ENCODE measurements at regions of chr1 and their contacts with region 1.

Region 1: GRCh38 chr1:86965012-86965826 is 50.8 kb downstream of the HS2ST1 start:
- DNase-seq: no peak
- ATAC-seq: peak in 2 of 4 donors; percentile 48 to 74
- H3K4me3 ChIP-seq: no peak overlapping the region
- H3K27ac ChIP-seq: no peak overlapping the region
- H3K4me1 ChIP-seq: no peaks in the 10 kb centered on the region
- H3K27me3 ChIP-seq: no peaks in the 10 kb centered on the region
- CTCF ChIP-seq: peak; percentile 64

Region 2: GRCh38 chr1:86470859-86471258 is 494.4 kb before region 1 on chr1:
- intact Hi-C with region 1: loop called in 1 of 2 experiments (anchors 10 kb)
- DNase-seq: no peak
- ATAC-seq: no peak
- H3K4me3 ChIP-seq: no peak overlapping the region
- H3K27ac ChIP-seq: no peak overlapping the region
- H3K4me1 ChIP-seq: no peaks in the 10 kb centered on the region
- H3K27me3 ChIP-seq: no peaks in the 10 kb centered on the region
- CTCF ChIP-seq: no peak

Region 3: DNA sequence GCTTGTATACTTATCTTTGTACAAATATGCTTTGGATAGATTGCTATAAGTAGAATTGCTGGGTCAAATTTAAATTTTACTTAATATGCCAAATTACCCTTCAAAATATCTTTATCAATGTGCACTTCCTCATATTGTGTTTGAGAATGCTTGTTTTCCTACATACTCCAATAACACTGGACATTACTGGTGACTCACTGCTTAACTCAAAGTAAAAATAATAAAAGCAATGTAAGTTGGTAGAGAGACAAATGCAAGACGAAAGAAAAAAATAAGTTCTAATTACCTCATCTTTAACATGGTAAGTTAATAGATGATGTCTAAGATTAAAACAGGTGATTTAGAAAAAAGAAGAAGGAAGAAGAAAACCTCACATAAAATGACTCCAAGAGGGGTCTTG is 268.7 kb before region 1 on chr1:
- intact Hi-C with region 1: no loop called
- DNase-seq: no peak
- ATAC-seq: no peak
- H3K4me3 ChIP-seq: no peak overlapping the region
- H3K27ac ChIP-seq: no peak overlapping the region
- H3K4me1 ChIP-seq: no peaks in the 10 kb centered on the region
- H3K27me3 ChIP-seq: no peaks in the 10 kb centered on the region
- CTCF ChIP-seq: no peak

Region 4: GRCh38 chr1:86822459-86822858 is 142.8 kb before region 1 on chr1:
- intact Hi-C with region 1: no loop called
- DNase-seq: no peak
- ATAC-seq: no peak
- H3K4me3 ChIP-seq: no peak overlapping the region
- H3K27ac ChIP-seq: no peak overlapping the region
- H3K4me1 ChIP-seq: no peaks in the 10 kb centered on the region
- H3K27me3 ChIP-seq: no peaks in the 10 kb centered on the region
- CTCF ChIP-seq: no peak

Region 5: DNA sequence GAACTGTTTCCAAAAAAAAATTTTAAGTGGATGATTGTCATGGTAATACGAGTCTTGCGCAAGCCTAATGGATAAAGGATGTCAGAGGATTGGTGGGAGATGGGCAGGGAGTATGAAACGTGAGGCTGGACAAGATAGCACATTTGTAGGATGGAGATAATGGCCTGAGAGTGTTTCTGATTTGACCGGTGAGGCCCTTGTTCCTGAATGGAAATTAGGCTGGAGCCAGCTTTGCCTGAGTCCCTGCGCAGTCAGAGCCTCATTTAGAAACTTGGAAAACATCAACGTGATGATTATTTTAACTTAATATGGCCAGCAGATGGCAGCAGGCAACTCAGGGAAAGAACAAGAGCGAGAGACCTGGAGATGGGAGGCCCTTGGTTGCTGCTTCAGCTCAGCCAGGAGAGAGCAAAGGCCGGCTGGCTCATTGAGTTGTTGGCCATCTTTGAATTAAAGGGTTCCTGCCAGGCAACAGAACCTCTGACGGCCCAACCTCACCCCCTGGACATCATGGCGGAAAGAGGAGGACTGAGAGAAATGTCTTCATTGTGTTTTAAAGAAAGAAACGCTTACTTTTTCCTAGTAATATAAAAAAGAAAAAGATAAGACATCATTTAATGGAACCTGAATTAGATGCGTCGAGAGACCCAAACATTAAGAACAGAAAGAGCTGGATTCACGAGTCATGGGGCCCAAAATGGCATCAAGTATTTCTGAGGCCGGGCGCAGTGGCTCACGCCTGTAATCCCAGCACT is 131.6 kb before region 1 on chr1:
- intact Hi-C with region 1: loop called (anchors 2 to 5 kb)
- DNase-seq: peak; percentile 61 to 70
- ATAC-seq: peak; percentile 87 to 98 (median 91)
- H3K4me3 ChIP-seq: no peak overlapping the region
- H3K27ac ChIP-seq: no peak overlapping the region
- H3K4me1 ChIP-seq: no peaks in the 10 kb centered on the region
- H3K27me3 ChIP-seq: no peaks in the 10 kb centered on the region
- CTCF ChIP-seq: peak; percentile 70

Region 6: GRCh38 chr1:86846166-86846647 is 119.0 kb before region 1 on chr1:
- intact Hi-C with region 1: no loop called
- DNase-seq: no peak
- ATAC-seq: peak in 1 of 4 donors; percentile 19
- H3K4me3 ChIP-seq: no peak overlapping the region
- H3K27ac ChIP-seq: no peak overlapping the region
- H3K4me1 ChIP-seq: no peaks in the 10 kb centered on the region
- H3K27me3 ChIP-seq: no peaks in the 10 kb centered on the region
- CTCF ChIP-seq: no peak